ENCODE measurements at regions of chr10 and their contacts with region 1.

Region 1: DNA sequence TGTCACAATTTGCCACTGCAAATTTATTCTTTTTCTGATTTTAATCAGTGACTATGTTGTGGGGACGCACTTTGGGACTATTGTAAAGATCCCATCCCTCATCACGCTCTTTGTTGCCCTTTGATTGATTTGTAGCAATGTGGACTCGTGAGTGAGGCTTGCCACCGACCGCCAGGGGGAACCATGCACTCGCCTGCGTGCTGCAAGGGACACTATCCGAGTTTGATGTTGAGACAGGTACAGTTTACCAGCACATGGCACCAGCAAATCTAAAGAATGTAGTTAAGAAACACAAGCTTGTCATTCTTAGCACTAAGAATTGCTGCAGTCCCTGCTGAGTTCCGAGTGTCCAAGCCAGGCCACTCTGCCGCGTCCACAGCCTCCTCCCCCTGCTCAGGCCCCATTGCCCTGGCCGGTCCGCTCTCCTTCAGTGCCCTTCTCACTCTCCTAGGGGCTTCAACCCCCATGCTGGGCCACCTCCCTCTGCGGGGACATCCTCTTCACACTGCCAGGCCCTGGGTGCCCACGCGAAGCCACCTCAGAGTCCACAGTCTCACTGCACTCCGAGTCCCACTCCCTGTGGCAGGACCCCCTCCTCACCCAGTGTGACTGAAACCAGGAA is 2.0 kb upstream of the SFTPA2 start:
- DNase-seq: peak; percentile 38 to 73 (median 48)
- ATAC-seq: peak; percentile 77
- H3K4me3 ChIP-seq: no peak overlapping the region
- H3K4me3 Mint-ChIP-seq: no peak overlapping the region
- H3K27ac ChIP-seq: no peak overlapping the region
- H3K27ac Mint-ChIP-seq: no peak overlapping the region
- H3K4me1 ChIP-seq: peaks cover 5% of the 10 kb centered on the region
- H3K4me1 Mint-ChIP-seq: no peaks in the 10 kb centered on the region
- H3K27me3 ChIP-seq: peaks cover 5 to 14% of the 10 kb centered on the region in 2 experiments
- H3K27me3 Mint-ChIP-seq: peaks cover 32% of the 10 kb centered on the region
- CTCF ChIP-seq: peak; percentile 72

Region 2: GRCh38 chr10:79929409-79929904 is 367.2 kb after region 1 on chr10:
- CTCF ChIA-PET with region 1: no interaction called
- POLR2A ChIA-PET with region 1: no interaction called
- intact Hi-C with region 1: loop called (anchors 1 kb)
- DNase-seq: peak; percentile 44 to 85 (median 66)
- ATAC-seq: peak; percentile 46
- H3K4me3 ChIP-seq: no peak overlapping the region
- H3K4me3 Mint-ChIP-seq: no peak overlapping the region
- H3K27ac ChIP-seq: no peak overlapping the region
- H3K27ac Mint-ChIP-seq: no peak overlapping the region
- H3K4me1 ChIP-seq: peaks cover 7% of the 10 kb centered on the region
- H3K4me1 Mint-ChIP-seq: no peaks in the 10 kb centered on the region
- H3K27me3 ChIP-seq: peaks cover 0 to 10% of the 10 kb centered on the region in 2 experiments
- H3K27me3 Mint-ChIP-seq: peaks cover 36% of the 10 kb centered on the region
- CTCF ChIP-seq: peak; percentile 65

Region 3: DNA sequence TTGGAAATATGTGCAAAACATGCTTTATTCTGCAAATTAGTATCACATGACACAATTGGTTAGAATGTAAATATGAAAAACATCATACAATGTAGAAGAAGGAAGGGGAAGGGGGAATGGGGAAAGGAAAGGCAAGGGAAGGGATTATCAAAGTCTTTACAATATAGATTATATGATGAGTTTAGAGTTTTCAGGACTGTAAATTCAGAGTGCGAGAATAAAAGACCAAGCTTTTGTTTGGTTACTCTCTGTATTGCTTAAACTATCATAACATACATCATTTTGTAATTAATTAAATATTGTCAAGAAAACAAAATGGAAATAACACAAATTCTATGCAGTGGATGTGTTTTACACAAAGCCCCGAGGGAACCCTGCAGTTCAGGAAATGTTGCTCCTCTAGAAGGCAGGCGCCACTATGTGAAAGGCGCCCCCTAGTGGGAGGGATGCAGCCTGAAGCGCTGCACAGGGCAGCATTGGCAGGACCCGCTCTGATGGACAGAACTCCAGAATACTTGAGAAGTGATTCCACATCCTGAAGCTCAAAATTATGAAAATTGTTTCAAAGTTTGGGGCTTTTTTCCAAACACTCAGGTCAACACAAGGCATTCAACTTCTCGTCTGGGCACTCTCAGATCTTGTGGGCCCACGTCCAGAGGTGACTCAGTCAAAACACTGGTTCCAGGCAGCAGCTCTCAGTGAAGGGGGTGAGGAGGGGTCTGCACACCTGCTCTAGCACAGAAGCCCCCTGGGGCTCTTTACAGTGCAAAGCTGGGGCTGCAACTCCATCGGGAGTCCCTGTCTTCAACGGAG is 484.6 kb after region 1 on chr10:
- CTCF ChIA-PET with region 1: no interaction called
- POLR2A ChIA-PET with region 1: no interaction called
- intact Hi-C with region 1: loop called in 1 of 2 experiments (anchors 10 kb)
- DNase-seq: peak; percentile 35 to 81 (median 62)
- ATAC-seq: peak; percentile 82
- H3K4me3 ChIP-seq: no peak overlapping the region
- H3K4me3 Mint-ChIP-seq: no peak overlapping the region
- H3K27ac ChIP-seq: no peak overlapping the region
- H3K27ac Mint-ChIP-seq: no peak overlapping the region
- H3K4me1 ChIP-seq: no peaks in the 10 kb centered on the region
- H3K4me1 Mint-ChIP-seq: no peaks in the 10 kb centered on the region
- H3K27me3 ChIP-seq: peaks cover 0 to 5% of the 10 kb centered on the region in 2 experiments
- H3K27me3 Mint-ChIP-seq: no peaks in the 10 kb centered on the region
- CTCF ChIP-seq: peak; percentile 87

Region 4: DNA sequence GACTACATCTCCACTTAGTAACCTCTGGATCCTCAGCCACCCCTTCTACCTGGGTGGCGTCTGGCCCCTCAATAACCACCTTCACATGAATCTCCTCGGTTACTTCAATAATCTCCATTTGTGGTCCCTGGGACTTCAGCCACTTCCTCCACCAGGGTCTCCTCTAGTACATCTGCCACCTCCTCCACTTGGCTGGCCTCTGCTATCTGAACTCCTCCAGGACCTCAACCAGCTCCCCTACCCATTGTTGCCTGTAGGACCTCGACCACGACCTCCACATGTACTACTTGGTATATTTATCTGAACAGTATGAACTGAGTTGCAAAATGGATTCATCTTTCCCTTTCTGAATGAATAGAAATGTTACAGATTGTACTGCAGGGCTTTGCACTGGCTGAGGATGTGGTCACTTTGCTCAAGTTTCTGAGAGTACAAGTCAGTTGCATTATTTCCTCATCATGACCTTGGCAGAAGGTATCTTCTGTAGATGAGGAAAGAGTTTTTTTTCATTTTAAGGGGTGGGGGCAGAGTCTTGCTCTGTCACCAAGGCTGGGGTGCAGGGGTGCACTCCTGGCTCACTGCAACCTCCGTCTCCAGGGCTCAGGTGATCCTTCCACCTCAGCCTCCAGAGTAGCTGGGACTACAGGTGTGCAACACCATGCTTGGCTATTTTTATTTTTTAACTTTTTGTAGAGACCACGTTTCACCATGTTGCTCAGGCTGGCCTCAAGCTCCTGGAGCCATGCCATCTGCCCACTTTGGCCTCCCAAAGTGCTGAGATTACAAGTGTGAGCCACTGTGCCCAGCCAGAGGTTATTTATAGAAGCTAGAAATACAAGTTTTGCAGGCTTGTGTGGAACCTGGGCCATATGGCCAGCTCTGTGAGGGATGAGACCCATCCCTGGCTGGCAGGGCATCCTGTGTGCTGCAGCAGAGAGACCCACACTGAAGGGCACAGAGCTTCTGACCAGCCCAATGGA is 691.3 kb after region 1 on chr10:
- CTCF ChIA-PET with region 1: no interaction called
- POLR2A ChIA-PET with region 1: no interaction called
- intact Hi-C with region 1: loop called in 1 of 2 experiments (anchors 10 kb)
- DNase-seq: peak in 1 of 14 experiments; percentile 1
- ATAC-seq: no peak
- H3K4me3 ChIP-seq: no peak overlapping the region
- H3K4me3 Mint-ChIP-seq: no peak overlapping the region
- H3K27ac ChIP-seq: no peak overlapping the region
- H3K27ac Mint-ChIP-seq: no peak overlapping the region
- H3K4me1 ChIP-seq: no peaks in the 10 kb centered on the region
- H3K4me1 Mint-ChIP-seq: no peaks in the 10 kb centered on the region
- H3K27me3 ChIP-seq: no peaks in the 10 kb centered on the region
- H3K27me3 Mint-ChIP-seq: no peaks in the 10 kb centered on the region
- CTCF ChIP-seq: no peak

Measured in CD4-positive, alpha-beta T cell (primary cell).